GM12878 (cell line): ENCODE measurements at regions of chr4 and their contacts with region 1.

Region 1: GRCh38 chr4:78612398-78613178 is 61.0 kb downstream of the ANXA3 start:
- DNase-seq: no peak
- ATAC-seq: peak; percentile 64
- H3K4me3 ChIP-seq: no peak overlapping the region
- H3K27ac ChIP-seq: no peak overlapping the region
- H3K4me1 ChIP-seq: peaks cover 35% of the 10 kb centered on the region
- H3K27me3 ChIP-seq: no peaks in the 10 kb centered on the region
- CTCF ChIP-seq: peak; percentile 55 to 80 (median 62)
- EP300 ChIP-seq: no peak
- POLR2A ChIP-seq: no peak
- RAD21 ChIP-seq: peak; percentile 89

Region 2: GRCh38 chr4:77157859-77158486 is 1454.6 kb before region 1 on chr4:
- CTCF ChIA-PET with region 1: no interaction called
- POLR2A ChIA-PET with region 1: no interaction called
- RAD21 ChIA-PET with region 1: no interaction called
- SMC1A ChIA-PET with region 1: no interaction called
- in situ Hi-C with region 1: no loop called
- intact Hi-C with region 1: no loop called
- DNase-seq: peak; percentile 45
- ATAC-seq: peak; percentile 81
- H3K4me3 ChIP-seq: peak overlapping the region; percentile 93
- H3K27ac ChIP-seq: peak overlapping the region; percentile 99
- H3K4me1 ChIP-seq: peaks cover 28% of the 10 kb centered on the region
- H3K27me3 ChIP-seq: no peaks in the 10 kb centered on the region
- CTCF ChIP-seq: peak in 2 of 3 experiments; percentile 18 to 49; a peak in 3 of 6 replicates
- EP300 ChIP-seq: no peak
- POLR2A ChIP-seq: peak; percentile 46; the same call in 1 of the 2 replicates
- RAD21 ChIP-seq: peak; percentile 29; the same call in 1 of the 2 replicates

Region 3: DNA sequence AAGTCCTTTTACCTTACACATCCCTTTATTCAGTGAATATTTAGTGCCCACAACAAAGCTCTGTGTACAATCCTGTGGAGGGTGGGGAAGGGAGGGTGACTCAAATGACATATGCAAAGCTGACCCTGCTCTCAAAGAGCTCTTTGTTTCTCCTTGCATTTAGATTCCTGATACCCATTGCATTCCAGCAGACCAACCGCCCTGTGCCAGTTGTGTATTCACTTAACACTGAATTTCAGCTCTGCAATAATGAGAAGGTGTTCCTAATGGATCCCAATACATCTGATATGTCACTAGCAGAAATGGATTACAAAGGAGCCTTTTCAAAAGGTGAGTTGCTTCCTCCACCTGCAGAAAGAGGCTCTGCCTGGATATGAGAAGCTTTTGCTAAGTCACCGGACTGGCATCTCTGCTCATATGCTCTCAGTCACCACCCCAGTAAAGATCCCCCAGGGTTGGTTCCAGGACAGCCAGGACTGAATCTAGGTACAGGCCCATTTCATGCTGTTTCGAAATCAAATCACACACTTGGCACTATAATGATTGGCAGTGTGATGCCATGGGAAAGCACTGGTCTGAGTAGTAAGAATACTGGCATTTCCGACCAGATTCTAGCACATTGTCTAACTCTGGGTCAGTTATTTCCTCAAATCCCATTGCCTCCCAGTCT is 78.2 kb before region 1 on chr4:
- CTCF ChIA-PET with region 1: no interaction called
- POLR2A ChIA-PET with region 1: no interaction called
- RAD21 ChIA-PET with region 1: no interaction called
- SMC1A ChIA-PET with region 1: no interaction called
- in situ Hi-C with region 1: no loop called
- intact Hi-C with region 1: no loop called
- DNase-seq: no peak
- ATAC-seq: no peak
- H3K4me3 ChIP-seq: no peak overlapping the region
- H3K27ac ChIP-seq: no peak overlapping the region
- H3K4me1 ChIP-seq: no peaks in the 10 kb centered on the region
- H3K27me3 ChIP-seq: no peaks in the 10 kb centered on the region; a peak in 1 of 4 replicates
- CTCF ChIP-seq: no peak
- EP300 ChIP-seq: no peak
- POLR2A ChIP-seq: no peak
- RAD21 ChIP-seq: no peak

Region 4: GRCh38 chr4:78592104-78592783 is 20.3 kb before region 1 on chr4:
- CTCF ChIA-PET with region 1: interaction called, 39 read pairs
- POLR2A ChIA-PET with region 1: interaction called, 7 read pairs
- RAD21 ChIA-PET with region 1: interaction called, 20 read pairs
- SMC1A ChIA-PET with region 1: interaction called, 197 read pairs
- in situ Hi-C with region 1: no loop called
- intact Hi-C with region 1: no loop called
- DNase-seq: no peak
- ATAC-seq: peak; percentile 70
- H3K4me3 ChIP-seq: no peak overlapping the region
- H3K27ac ChIP-seq: no peak overlapping the region
- H3K4me1 ChIP-seq: no peaks in the 10 kb centered on the region
- H3K27me3 ChIP-seq: no peaks in the 10 kb centered on the region
- CTCF ChIP-seq: peak; percentile 34 to 61 (median 55)
- EP300 ChIP-seq: peak in 1 of 2 experiments; percentile 77; a peak in 2 of 4 replicates
- POLR2A ChIP-seq: no peak
- RAD21 ChIP-seq: no peak; the same call in 1 of the 2 replicates

Region 5: GRCh38 chr4:78644744-78645330 is 32.2 kb after region 1 on chr4:
- CTCF ChIA-PET with region 1: interaction called, 101 read pairs
- POLR2A ChIA-PET with region 1: no interaction called
- RAD21 ChIA-PET with region 1: interaction called, 24 read pairs
- SMC1A ChIA-PET with region 1: interaction called, 92 read pairs
- in situ Hi-C with region 1: no loop called
- intact Hi-C with region 1: no loop called
- DNase-seq: no peak
- ATAC-seq: peak; percentile 92
- H3K4me3 ChIP-seq: no peak overlapping the region
- H3K27ac ChIP-seq: no peak overlapping the region
- H3K4me1 ChIP-seq: peaks cover 29% of the 10 kb centered on the region
- H3K27me3 ChIP-seq: no peaks in the 10 kb centered on the region
- CTCF ChIP-seq: peak; percentile 78 to 92 (median 92)
- EP300 ChIP-seq: no peak
- POLR2A ChIP-seq: no peak
- RAD21 ChIP-seq: peak; percentile 87

Region 6: DNA sequence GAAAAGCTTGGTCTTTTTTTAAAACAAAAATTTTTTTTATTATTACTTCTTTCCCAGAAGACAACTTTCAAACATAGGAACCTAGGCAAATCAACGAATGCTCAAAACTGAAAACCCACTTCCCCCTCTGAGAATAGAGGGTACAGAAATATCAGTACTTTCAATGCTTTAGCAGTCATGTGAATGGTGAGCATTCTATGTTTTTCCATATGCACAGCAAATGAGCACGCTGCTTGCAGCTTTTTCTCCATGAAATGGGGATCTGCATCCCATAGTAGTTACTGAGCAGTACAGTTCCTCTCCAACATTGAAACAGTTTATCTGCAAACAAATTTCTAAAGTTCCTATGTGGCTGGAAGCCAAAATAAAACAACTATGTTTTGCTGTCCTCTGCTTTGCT is 55.2 kb after region 1 on chr4:
- CTCF ChIA-PET with region 1: interaction called, 11 read pairs
- POLR2A ChIA-PET with region 1: no interaction called
- RAD21 ChIA-PET with region 1: interaction called, 9 read pairs
- SMC1A ChIA-PET with region 1: interaction called, 79 read pairs
- in situ Hi-C with region 1: no loop called
- intact Hi-C with region 1: loop called (anchors 1 kb)
- DNase-seq: peak; percentile 69
- ATAC-seq: peak; percentile 86
- H3K4me3 ChIP-seq: peak overlapping the region; percentile 27; the same call in 1 of the 2 replicates
- H3K27ac ChIP-seq: no peak overlapping the region
- H3K4me1 ChIP-seq: peaks cover 16% of the 10 kb centered on the region
- H3K27me3 ChIP-seq: peaks cover 0 to 1% of the 10 kb centered on the region in 2 experiments; a peak in 1 of 4 replicates
- CTCF ChIP-seq: no peak
- EP300 ChIP-seq: 0 out of 4 replicates have a peak, but pooled peaks have one; percentile 28 to 37
- POLR2A ChIP-seq: no peak
- RAD21 ChIP-seq: no peak

Region 7: DNA sequence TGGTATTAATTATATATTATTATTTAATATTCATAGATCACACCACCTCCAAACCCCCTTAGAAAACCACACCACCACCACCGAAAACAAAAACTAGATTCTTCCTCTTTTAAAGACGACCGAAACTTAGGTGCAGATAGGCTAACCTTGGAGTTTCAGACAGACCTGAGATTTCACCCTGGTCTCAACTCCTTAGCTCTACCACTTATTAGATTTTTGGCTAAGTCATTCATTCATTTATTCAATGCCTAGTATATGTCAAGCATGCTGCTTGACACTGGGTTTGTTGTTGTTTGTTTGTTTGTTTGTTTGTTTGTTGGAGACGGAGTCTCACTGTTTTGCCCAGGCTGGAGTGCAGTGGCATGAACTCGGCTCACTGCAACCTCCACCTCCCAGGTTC is 154.1 kb after region 1 on chr4:
- CTCF ChIA-PET with region 1: interaction called, 8 read pairs
- POLR2A ChIA-PET with region 1: no interaction called
- RAD21 ChIA-PET with region 1: interaction called, 13 read pairs
- SMC1A ChIA-PET with region 1: interaction called, 21 read pairs
- in situ Hi-C with region 1: no loop called
- intact Hi-C with region 1: no loop called
- DNase-seq: no peak
- ATAC-seq: peak; percentile 92
- H3K4me3 ChIP-seq: peak overlapping the region; percentile 14; the same call in 1 of the 2 replicates
- H3K27ac ChIP-seq: no peak overlapping the region
- H3K4me1 ChIP-seq: peaks cover 27% of the 10 kb centered on the region
- H3K27me3 ChIP-seq: no peaks in the 10 kb centered on the region
- CTCF ChIP-seq: no peak
- EP300 ChIP-seq: no peak
- POLR2A ChIP-seq: no peak
- RAD21 ChIP-seq: no peak

Region 8: GRCh38 chr4:78938868-78939666 is 326.5 kb after region 1 on chr4 and contains the start of gene PAQR3:
- CTCF ChIA-PET with region 1: no interaction called
- POLR2A ChIA-PET with region 1: no interaction called
- RAD21 ChIA-PET with region 1: no interaction called
- SMC1A ChIA-PET with region 1: interaction called, 7 read pairs
- in situ Hi-C with region 1: no loop called
- intact Hi-C with region 1: loop called (anchors 5 kb)
- DNase-seq: peak; percentile 21
- ATAC-seq: peak; percentile 97
- H3K4me3 ChIP-seq: peak within 1 kb of the TSS; percentile 78
- H3K27ac ChIP-seq: no peak within 1 kb of the TSS; the same call in 1 of the 2 replicates
- H3K4me1 ChIP-seq: no peaks in the 10 kb centered on the region; the same call in 1 of the 2 replicates
- H3K27me3 ChIP-seq: no peaks in the 10 kb centered on the region
- CTCF ChIP-seq: 0 out of 6 replicates have a peak, but pooled peaks of 1 of the 3 experiments have one; percentile 1
- EP300 ChIP-seq: no peak
- POLR2A ChIP-seq: peak; percentile 88
- RAD21 ChIP-seq: no peak
- polyA plus RNA-seq, gene PAQR3: 2.2 to 3.0 TPM